ENCODE measurements at regions of chr9 and their contacts with region 1.

Region 1: GRCh38 chr9:127503947-127504782 is 52.9 kb downstream of the LRSAM1 start:
- DNase-seq: peak; percentile 66
- ATAC-seq: peak; percentile 78
- H3K4me3 ChIP-seq: no peak overlapping the region
- H3K27ac ChIP-seq: no peak overlapping the region
- H3K4me1 ChIP-seq: no peaks in the 10 kb centered on the region
- H3K27me3 ChIP-seq: no peaks in the 10 kb centered on the region
- CTCF ChIP-seq: peak; percentile 80

Region 2: DNA sequence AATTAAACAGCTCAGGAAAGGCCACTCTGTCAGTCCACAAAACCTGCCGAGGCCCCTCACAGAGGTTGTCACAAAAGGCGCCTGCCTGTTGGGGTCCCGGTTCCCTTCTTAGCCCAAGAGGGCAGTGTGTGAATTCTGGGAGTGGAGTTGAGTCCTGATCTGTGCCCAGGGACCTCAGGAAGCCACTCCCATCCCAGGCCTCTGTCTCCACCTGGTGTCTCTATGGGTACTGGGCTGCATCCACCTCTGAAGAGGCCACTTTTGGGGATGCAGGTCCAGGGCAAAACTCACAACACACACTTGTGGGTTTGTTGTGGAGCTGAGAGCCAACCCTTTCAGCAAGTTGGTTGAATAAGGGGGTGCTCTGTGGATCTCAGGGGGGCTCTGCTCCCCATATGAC is 33.6 kb after region 1 on chr9:
- CTCF ChIA-PET with region 1: interaction called, 4 read pairs
- POLR2A ChIA-PET with region 1: no interaction called
- intact Hi-C with region 1: loop called (anchors 1 kb)
- DNase-seq: peak; percentile 38
- ATAC-seq: peak; percentile 67
- H3K4me3 ChIP-seq: no peak overlapping the region
- H3K27ac ChIP-seq: peak overlapping the region; percentile 79
- H3K4me1 ChIP-seq: peaks cover 49% of the 10 kb centered on the region
- H3K27me3 ChIP-seq: no peaks in the 10 kb centered on the region
- CTCF ChIP-seq: peak; percentile 55

Measured in PC-3 (cell line).